B cell (primary cell): ENCODE measurements at regions of chr5 and their contacts with region 1.

Region 1: GRCh38 chr5:132180134-132180745 is 47.4 kb downstream of the P4HA2 start:
- DNase-seq: peak; percentile 49
- ATAC-seq: no peak
- H3K4me3 ChIP-seq: no peak overlapping the region
- H3K4me3 Mint-ChIP-seq: no peak overlapping the region
- H3K27ac ChIP-seq: no peak overlapping the region
- H3K27ac Mint-ChIP-seq: no peak overlapping the region
- H3K4me1 ChIP-seq: peaks cover 17 to 19% of the 10 kb centered on the region in 2 donors
- H3K4me1 Mint-ChIP-seq: peaks cover 22% of the 10 kb centered on the region
- H3K27me3 ChIP-seq: no peaks in the 10 kb centered on the region
- H3K27me3 Mint-ChIP-seq: no peaks in the 10 kb centered on the region
- CTCF ChIP-seq: peak; percentile 75

Region 2: GRCh38 chr5:132190161-132190817 is 10.0 kb after region 1 on chr5:
- CTCF ChIA-PET with region 1: interaction called, 12 read pairs
- POLR2A ChIA-PET with region 1: no interaction called
- intact Hi-C with region 1: no loop called
- DNase-seq: peak; percentile 61
- ATAC-seq: peak; percentile 96
- H3K4me3 ChIP-seq: no peak overlapping the region
- H3K4me3 Mint-ChIP-seq: no peak overlapping the region
- H3K27ac ChIP-seq: no peak overlapping the region
- H3K27ac Mint-ChIP-seq: no peak overlapping the region
- H3K4me1 ChIP-seq: no peaks in the 10 kb centered on the region
- H3K4me1 Mint-ChIP-seq: peaks cover 2% of the 10 kb centered on the region
- H3K27me3 ChIP-seq: no peaks in the 10 kb centered on the region
- H3K27me3 Mint-ChIP-seq: peaks cover 5% of the 10 kb centered on the region
- CTCF ChIP-seq: peak; percentile 60

Region 3: GRCh38 chr5:132195727-132196126 is 15.5 kb after region 1 on chr5:
- CTCF ChIA-PET with region 1: interaction called, 12 read pairs
- POLR2A ChIA-PET with region 1: no interaction called
- intact Hi-C with region 1: no loop called
- DNase-seq: no peak
- ATAC-seq: no peak
- H3K4me3 ChIP-seq: no peak overlapping the region
- H3K4me3 Mint-ChIP-seq: no peak overlapping the region
- H3K27ac ChIP-seq: no peak overlapping the region
- H3K27ac Mint-ChIP-seq: no peak overlapping the region
- H3K4me1 ChIP-seq: no peaks in the 10 kb centered on the region
- H3K4me1 Mint-ChIP-seq: no peaks in the 10 kb centered on the region
- H3K27me3 ChIP-seq: no peaks in the 10 kb centered on the region
- H3K27me3 Mint-ChIP-seq: no peaks in the 10 kb centered on the region
- CTCF ChIP-seq: no peak